ENCODE measurements at regions of chr13 and their contacts with region 1.

Region 1: GRCh38 chr13:37011002-37011401 is 10.4 kb downstream of the EXOSC8 start:
- DNase-seq: peak; percentile 59
- ATAC-seq: peak; percentile 38; the same call in 1 of the 2 replicates
- H3K4me3 ChIP-seq: no peak overlapping the region
- H3K27ac ChIP-seq: no peak overlapping the region
- H3K4me1 ChIP-seq: peaks cover 4% of the 10 kb centered on the region
- H3K27me3 ChIP-seq: no peaks in the 10 kb centered on the region
- CTCF ChIP-seq: no peak
- POLR2A ChIP-seq: no peak
- RAD21 ChIP-seq: no peak

Region 2: GRCh38 chr13:37049810-37050209 is 38.8 kb after region 1 on chr13:
- CTCF ChIA-PET with region 1: no interaction called
- POLR2A ChIA-PET with region 1: no interaction called
- dilution Hi-C with region 1: no loop called
- in situ Hi-C with region 1: no loop called
- intact Hi-C with region 1: loop called (anchors 5 kb)
- DNase-seq: no peak
- ATAC-seq: no peak
- H3K4me3 ChIP-seq: no peak overlapping the region
- H3K27ac ChIP-seq: no peak overlapping the region
- H3K4me1 ChIP-seq: no peaks in the 10 kb centered on the region
- H3K27me3 ChIP-seq: no peaks in the 10 kb centered on the region
- CTCF ChIP-seq: no peak
- POLR2A ChIP-seq: no peak
- RAD21 ChIP-seq: no peak

Region 3: DNA sequence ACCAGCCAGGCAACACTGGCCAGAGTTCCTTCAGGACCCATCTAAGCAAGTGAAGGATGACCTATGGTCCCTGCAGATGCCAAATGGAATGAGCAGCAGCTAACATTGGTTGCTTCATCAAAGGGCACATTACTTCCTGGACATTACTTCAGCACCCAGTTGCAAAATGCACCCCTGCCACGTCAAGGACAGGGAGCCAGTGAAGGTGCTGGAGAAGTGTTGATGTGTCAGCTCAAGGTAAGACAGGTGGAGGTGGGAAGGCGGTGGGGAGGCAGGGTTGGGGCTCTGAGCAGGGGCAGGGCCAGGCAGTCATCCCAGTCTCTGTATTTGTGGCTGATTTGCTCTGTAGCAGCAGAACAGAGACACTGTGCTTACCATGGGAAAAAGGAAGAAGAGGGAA is 79.9 kb after region 1 on chr13:
- CTCF ChIA-PET with region 1: no interaction called
- POLR2A ChIA-PET with region 1: no interaction called
- dilution Hi-C with region 1: no loop called
- in situ Hi-C with region 1: no loop called
- intact Hi-C with region 1: no loop called
- DNase-seq: no peak
- ATAC-seq: no peak
- H3K4me3 ChIP-seq: no peak overlapping the region
- H3K27ac ChIP-seq: no peak overlapping the region
- H3K4me1 ChIP-seq: no peaks in the 10 kb centered on the region
- H3K27me3 ChIP-seq: peaks cover 4% of the 10 kb centered on the region
- CTCF ChIP-seq: no peak
- POLR2A ChIP-seq: no peak
- RAD21 ChIP-seq: no peak

Region 4: GRCh38 chr13:37429976-37430375 is 419.0 kb after region 1 on chr13:
- CTCF ChIA-PET with region 1: no interaction called
- POLR2A ChIA-PET with region 1: no interaction called
- dilution Hi-C with region 1: no loop called
- in situ Hi-C with region 1: no loop called
- intact Hi-C with region 1: no loop called
- DNase-seq: peak; percentile 98
- ATAC-seq: peak; percentile 95
- H3K4me3 ChIP-seq: no peak overlapping the region
- H3K27ac ChIP-seq: no peak overlapping the region
- H3K4me1 ChIP-seq: peaks cover 4% of the 10 kb centered on the region; the same call in 1 of the 2 replicates
- H3K27me3 ChIP-seq: no peaks in the 10 kb centered on the region
- CTCF ChIP-seq: no peak
- POLR2A ChIP-seq: no peak
- RAD21 ChIP-seq: peak; percentile 29

Measured in IMR-90 (cell line).